Activated CD8-positive, alpha-beta memory T cell treated with anti-CD3 and anti-CD28 coated beads, Interleukin-2, amount 10 ng/mL, durations not matched to agents 7 days and 5 days (primary cell): ENCODE measurements at regions of chr1 and their contacts with region 1.

Region 1: GRCh38 chr1:160376525-160377131 is 9.8 kb downstream of the NHLH1 start:
- DNase-seq: peak; percentile 57
- ATAC-seq: peak; percentile 84
- H3K4me3 Mint-ChIP-seq: no peak overlapping the region
- H3K27ac Mint-ChIP-seq: no peak overlapping the region
- H3K4me1 Mint-ChIP-seq: peaks cover 13% of the 10 kb centered on the region
- H3K27me3 Mint-ChIP-seq: peaks cover 4% of the 10 kb centered on the region

Region 2: GRCh38 chr1:160354388-160354985 is 22.1 kb before region 1 on chr1:
- CTCF ChIA-PET with region 1: interaction called, 63 read pairs
- DNase-seq: no peak
- ATAC-seq: no peak
- H3K4me3 Mint-ChIP-seq: no peak overlapping the region
- H3K27ac Mint-ChIP-seq: no peak overlapping the region
- H3K4me1 Mint-ChIP-seq: peaks cover 3% of the 10 kb centered on the region
- H3K27me3 Mint-ChIP-seq: no peaks in the 10 kb centered on the region

Region 3: GRCh38 chr1:160550572-160551034 is 174.0 kb after region 1 on chr1:
- CTCF ChIA-PET with region 1: no interaction called
- DNase-seq: peak; percentile 71
- ATAC-seq: peak; percentile 80
- H3K4me3 Mint-ChIP-seq: no peak overlapping the region
- H3K27ac Mint-ChIP-seq: peak overlapping the region; percentile 9
- H3K4me1 Mint-ChIP-seq: no peaks in the 10 kb centered on the region
- H3K27me3 Mint-ChIP-seq: no peaks in the 10 kb centered on the region